SK-N-SH (cell line): ENCODE measurements at regions of chr1 and their contacts with region 1.

Region 1: DNA sequence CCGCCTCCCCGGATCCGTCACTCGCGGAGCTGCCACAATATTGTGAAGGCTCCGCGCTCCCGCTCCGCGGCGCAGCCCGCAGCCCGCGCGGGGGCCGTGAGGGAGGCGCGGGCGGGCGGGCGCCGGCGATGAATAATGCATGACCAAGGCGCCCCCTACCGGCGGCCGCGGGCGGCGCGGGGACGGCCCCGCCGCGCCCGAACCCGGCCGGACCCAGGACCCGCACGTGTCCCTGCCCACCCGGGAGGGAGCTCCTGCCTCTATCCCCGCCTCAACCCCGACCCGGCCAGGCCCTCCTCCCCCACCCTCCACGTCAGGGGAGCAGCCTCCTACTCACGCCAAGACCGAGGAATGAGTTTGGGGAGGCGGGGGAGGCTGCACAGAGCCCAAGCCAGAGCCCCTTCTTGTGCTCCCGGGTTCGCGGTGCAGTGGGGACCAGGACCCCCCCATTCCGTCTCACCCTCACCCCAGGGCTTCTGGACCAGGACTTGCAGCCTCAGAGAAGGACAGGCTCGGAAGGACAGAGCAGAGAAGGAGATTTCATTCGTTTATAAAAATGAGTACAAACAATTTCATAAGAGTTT is 70.8 kb upstream of the CASZ1 start:
- DNase-seq: peak; percentile 95
- H3K4me3 ChIP-seq: peak overlapping the region; percentile 44 to 57; a peak in 3 of 4 replicates
- H3K27ac ChIP-seq: no peak overlapping the region; a peak in 1 of 4 replicates
- H3K4me1 ChIP-seq: peaks cover 0 to 17% of the 10 kb centered on the region in 2 experiments; a peak in 2 of 4 replicates
- H3K27me3 ChIP-seq: 0 out of 2 replicates have a peak, but pooled peaks cover 7% of the 10 kb centered on the region
- CTCF ChIP-seq: peak; percentile 61
- EP300 ChIP-seq: no peak; a peak in 1 of 4 replicates
- RAD21 ChIP-seq: peak; percentile 66

Region 2: DNA sequence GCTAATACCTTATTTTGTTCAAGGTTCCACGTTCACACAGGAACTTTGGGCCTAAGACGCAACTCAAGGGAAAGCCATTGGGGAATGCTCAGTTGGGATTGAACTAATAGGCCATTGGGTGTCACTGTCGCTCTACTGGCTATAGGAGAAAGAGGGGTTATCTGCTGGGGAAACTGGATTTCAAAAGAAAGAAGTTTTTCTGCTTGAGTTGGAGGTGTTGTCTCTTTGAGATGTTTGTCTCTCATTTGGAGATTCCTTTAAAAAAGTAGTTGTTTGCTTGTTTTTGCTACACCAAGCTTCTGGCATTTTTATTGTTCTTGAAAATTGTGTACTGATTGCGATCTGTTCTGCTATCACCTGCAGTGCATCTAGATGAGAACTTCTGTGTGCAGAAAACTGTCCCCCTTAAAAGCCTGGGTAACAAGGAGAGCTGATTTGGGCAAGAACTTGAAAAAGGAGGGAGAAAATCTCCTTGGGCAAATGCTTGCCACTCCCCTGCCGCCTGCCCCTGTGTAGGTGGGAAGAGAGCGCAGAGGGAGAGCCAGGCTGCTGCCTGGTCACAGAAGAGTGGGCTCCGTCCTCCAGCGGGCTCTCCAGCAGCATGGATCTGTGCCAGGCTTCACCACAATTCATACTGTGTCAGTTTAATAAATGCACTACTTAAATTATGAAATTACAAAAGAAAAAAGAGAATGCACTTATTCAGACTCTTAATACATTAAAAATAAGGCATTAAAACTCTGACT is 352.6 kb before region 1 on chr1:
- CTCF ChIA-PET with region 1: interaction called, 22 read pairs
- POLR2A ChIA-PET with region 1: no interaction called
- DNase-seq: peak; percentile 66
- H3K4me3 ChIP-seq: no peak overlapping the region
- H3K27ac ChIP-seq: no peak overlapping the region
- H3K4me1 ChIP-seq: peaks cover 32 to 50% of the 10 kb centered on the region in 2 experiments
- H3K27me3 ChIP-seq: no peaks in the 10 kb centered on the region
- CTCF ChIP-seq: peak; percentile 80
- EP300 ChIP-seq: no peak
- RAD21 ChIP-seq: peak; percentile 92

Region 3: GRCh38 chr1:10686404-10687040 is 180.7 kb before region 1 on chr1:
- CTCF ChIA-PET with region 1: interaction called, 15 read pairs
- POLR2A ChIA-PET with region 1: no interaction called
- DNase-seq: no peak
- H3K4me3 ChIP-seq: no peak overlapping the region
- H3K27ac ChIP-seq: no peak overlapping the region
- H3K4me1 ChIP-seq: peaks cover 6 to 20% of the 10 kb centered on the region in 2 experiments; a peak in 2 of 4 replicates
- H3K27me3 ChIP-seq: no peaks in the 10 kb centered on the region
- CTCF ChIP-seq: no peak
- EP300 ChIP-seq: no peak
- RAD21 ChIP-seq: no peak

Region 4: GRCh38 chr1:10796019-10796944 is 70.9 kb before region 1 on chr1 and contains the start of gene CASZ1:
- CTCF ChIA-PET with region 1: interaction called, 11 read pairs
- POLR2A ChIA-PET with region 1: no interaction called
- DNase-seq: peak; percentile 99
- H3K4me3 ChIP-seq: peak within 1 kb of the TSS; percentile 52 to 67
- H3K27ac ChIP-seq: no peak within 1 kb of the TSS
- H3K4me1 ChIP-seq: peaks cover 3 to 18% of the 10 kb centered on the region in 2 experiments; a peak in 2 of 4 replicates
- H3K27me3 ChIP-seq: peaks cover 53% of the 10 kb centered on the region
- CTCF ChIP-seq: no peak
- EP300 ChIP-seq: 0 out of 4 replicates have a peak, but pooled peaks have one; percentile 34 to 37
- RAD21 ChIP-seq: no peak; the same call in 1 of the 2 replicates
- polyA plus RNA-seq, gene CASZ1: 0.37 and 0.51 TPM in 2 replicates

Region 5: GRCh38 chr1:10856863-10857598 is 10.2 kb before region 1 on chr1:
- CTCF ChIA-PET with region 1: interaction called, 21 read pairs
- POLR2A ChIA-PET with region 1: no interaction called
- DNase-seq: no peak
- H3K4me3 ChIP-seq: no peak overlapping the region
- H3K27ac ChIP-seq: no peak overlapping the region
- H3K4me1 ChIP-seq: no peaks in the 10 kb centered on the region
- H3K27me3 ChIP-seq: no peaks in the 10 kb centered on the region
- CTCF ChIP-seq: no peak
- EP300 ChIP-seq: no peak
- RAD21 ChIP-seq: no peak

Region 6: GRCh38 chr1:10901086-10901890 is 34.1 kb after region 1 on chr1:
- CTCF ChIA-PET with region 1: interaction called, 17 read pairs
- POLR2A ChIA-PET with region 1: no interaction called
- DNase-seq: peak; percentile 70
- H3K4me3 ChIP-seq: no peak overlapping the region
- H3K27ac ChIP-seq: peak overlapping the region in 1 of 2 experiments; percentile 64; a peak in 2 of 4 replicates
- H3K4me1 ChIP-seq: peaks cover 0 to 61% of the 10 kb centered on the region in 2 experiments; a peak in 1 of 4 replicates
- H3K27me3 ChIP-seq: no peaks in the 10 kb centered on the region
- CTCF ChIP-seq: no peak
- EP300 ChIP-seq: no peak
- RAD21 ChIP-seq: no peak